T-cell (primary cell): ENCODE measurements at regions of chr9 and their contacts with region 1.

Region 1: GRCh38 chr9:89549031-89549644 is 51.2 kb upstream of the SEMA4D start:
- DNase-seq: peak; percentile 58 to 93 (median 81)
- ATAC-seq: peak; percentile 96 to 99 (median 97)
- H3K4me3 ChIP-seq: no peak overlapping the region
- H3K4me3 Mint-ChIP-seq: peak overlapping the region in 1 of 3 donors; percentile 45
- H3K27ac ChIP-seq: peak overlapping the region; percentile 2
- H3K27ac Mint-ChIP-seq: peak overlapping the region; percentile 74 to 75
- H3K4me1 ChIP-seq: peaks cover 8 to 20% of the 10 kb centered on the region in 2 experiments
- H3K4me1 Mint-ChIP-seq: peaks cover 21 to 36% (median 28%) of the 10 kb centered on the region in 3 donors
- H3K27me3 ChIP-seq: no peaks in the 10 kb centered on the region
- H3K27me3 Mint-ChIP-seq: no peaks in the 10 kb centered on the region

Region 2: GRCh38 chr9:89410641-89411350 is 138.3 kb before region 1 on chr9:
- CTCF ChIA-PET with region 1: interaction called, 4 to 12 read pairs
- POLR2A ChIA-PET with region 1: no interaction called
- DNase-seq: peak in 1 of 35 experiments; percentile 66
- ATAC-seq: peak in 1 of 4 experiments; percentile 30
- H3K4me3 ChIP-seq: no peak overlapping the region
- H3K4me3 Mint-ChIP-seq: peak overlapping the region in 2 of 3 donors; percentile 46 to 83
- H3K27ac ChIP-seq: peak overlapping the region; percentile 11
- H3K27ac Mint-ChIP-seq: peak overlapping the region; percentile 94 to 95
- H3K4me1 ChIP-seq: peaks cover 19 to 97% of the 10 kb centered on the region in 2 experiments
- H3K4me1 Mint-ChIP-seq: peaks cover 82 to 96% (median 91%) of the 10 kb centered on the region in 3 donors
- H3K27me3 ChIP-seq: no peaks in the 10 kb centered on the region
- H3K27me3 Mint-ChIP-seq: no peaks in the 10 kb centered on the region

Region 3: GRCh38 chr9:89428901-89429890 is 119.9 kb before region 1 on chr9:
- CTCF ChIA-PET with region 1: interaction called, 31 to 66 read pairs
- POLR2A ChIA-PET with region 1: no interaction called
- DNase-seq: peak in 34 of 35 experiments; percentile 40 to 83 (median 70)
- ATAC-seq: peak; percentile 48 to 78 (median 53)
- H3K4me3 ChIP-seq: no peak overlapping the region
- H3K4me3 Mint-ChIP-seq: peak overlapping the region in 2 of 3 donors; percentile 34 to 70
- H3K27ac ChIP-seq: peak overlapping the region; percentile 27
- H3K27ac Mint-ChIP-seq: peak overlapping the region; percentile 89 to 94
- H3K4me1 ChIP-seq: peaks cover 27 to 100% of the 10 kb centered on the region in 2 experiments
- H3K4me1 Mint-ChIP-seq: peaks cover 95 to 100% (median 98%) of the 10 kb centered on the region in 3 donors
- H3K27me3 ChIP-seq: no peaks in the 10 kb centered on the region
- H3K27me3 Mint-ChIP-seq: no peaks in the 10 kb centered on the region

Region 4: DNA sequence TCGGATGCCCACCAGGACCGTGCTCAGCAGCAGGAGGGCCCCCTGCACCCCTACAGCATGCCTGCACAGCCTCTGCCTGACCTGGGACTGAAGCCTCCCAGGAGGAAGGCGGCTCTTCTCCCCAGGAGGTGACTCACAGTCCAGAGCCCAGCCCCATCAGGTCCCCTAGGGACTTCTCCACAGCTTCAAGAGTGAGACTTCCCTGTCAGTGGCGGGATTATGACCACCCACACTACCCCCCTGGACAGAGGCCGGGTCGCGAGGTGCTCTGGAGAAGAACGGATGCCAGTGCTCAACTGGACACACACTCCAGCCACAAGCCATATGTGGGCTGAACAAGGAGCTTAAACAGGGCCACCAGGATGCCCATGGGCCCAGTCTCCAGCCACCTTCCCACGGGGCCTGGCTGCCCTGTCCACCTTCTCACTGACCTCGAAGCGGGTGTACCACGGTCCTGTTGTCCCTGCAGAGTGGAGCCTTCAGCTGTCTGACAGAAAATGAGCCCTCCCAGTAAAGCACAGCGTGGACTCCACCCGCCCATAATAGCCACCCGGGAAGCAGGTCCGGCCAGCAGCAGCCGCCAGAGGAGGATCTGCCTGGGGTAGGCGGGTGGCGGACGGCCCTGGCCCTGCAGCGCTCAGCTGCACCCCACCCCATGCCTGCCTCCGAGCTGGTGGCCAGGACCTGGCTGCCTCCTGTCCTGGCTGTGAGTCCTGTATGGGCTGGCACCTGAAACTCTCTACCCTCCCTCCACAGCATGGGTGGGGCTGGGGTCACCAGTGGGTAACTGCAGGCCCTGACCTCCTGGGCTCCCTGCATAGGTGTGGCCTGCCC is 105.9 kb before region 1 on chr9:
- CTCF ChIA-PET with region 1: interaction called, 8 to 11 read pairs
- POLR2A ChIA-PET with region 1: interaction called in 1 of 2 experiments, 5 read pairs
- DNase-seq: no peak
- ATAC-seq: no peak
- H3K4me3 ChIP-seq: no peak overlapping the region
- H3K4me3 Mint-ChIP-seq: peak overlapping the region in 1 of 3 donors; percentile 72
- H3K27ac ChIP-seq: peak overlapping the region; percentile 70
- H3K27ac Mint-ChIP-seq: peak overlapping the region; percentile 92 to 95
- H3K4me1 ChIP-seq: peaks cover 31 to 93% of the 10 kb centered on the region in 2 experiments
- H3K4me1 Mint-ChIP-seq: peaks cover 71 to 94% (median 93%) of the 10 kb centered on the region in 3 donors
- H3K27me3 ChIP-seq: no peaks in the 10 kb centered on the region
- H3K27me3 Mint-ChIP-seq: no peaks in the 10 kb centered on the region

Region 5: DNA sequence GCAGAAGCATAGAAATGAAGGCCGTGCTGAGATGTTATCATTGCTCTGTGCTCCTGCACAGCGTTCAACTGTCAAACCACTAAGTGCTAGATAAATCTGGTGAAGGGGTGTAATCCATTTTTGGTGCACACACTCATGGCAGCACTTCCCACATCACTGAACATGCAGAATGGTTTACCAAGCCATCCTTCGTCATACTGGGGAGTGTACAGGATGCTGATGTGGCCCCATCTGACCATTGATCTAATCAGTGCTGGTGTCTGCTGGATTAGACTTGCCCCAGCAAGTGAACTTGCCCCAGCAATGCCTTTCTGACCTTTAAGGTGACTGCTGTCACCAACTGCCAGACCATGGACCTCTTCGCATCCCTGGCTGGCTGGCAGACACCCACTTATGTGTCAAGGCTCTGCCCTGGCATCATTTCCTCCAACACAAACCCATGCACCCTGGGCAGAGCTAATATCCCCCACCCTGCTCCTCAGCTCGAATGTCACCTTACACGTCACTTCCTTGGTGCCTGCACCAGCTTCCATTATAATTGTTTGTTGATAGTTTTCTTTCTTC is 47.0 kb before region 1 on chr9:
- CTCF ChIA-PET with region 1: interaction called in 1 of 2 experiments, 16 read pairs
- POLR2A ChIA-PET with region 1: no interaction called
- DNase-seq: peak in 34 of 35 experiments; percentile 31 to 85 (median 60)
- ATAC-seq: peak; percentile 31 to 76 (median 46)
- H3K4me3 ChIP-seq: no peak overlapping the region
- H3K4me3 Mint-ChIP-seq: peak overlapping the region; percentile 14 to 44 (median 29)
- H3K27ac ChIP-seq: peak overlapping the region; percentile 91
- H3K27ac Mint-ChIP-seq: peak overlapping the region; percentile 91 to 94
- H3K4me1 ChIP-seq: peaks cover 48 to 67% of the 10 kb centered on the region in 2 experiments
- H3K4me1 Mint-ChIP-seq: peaks cover 73 to 87% (median 79%) of the 10 kb centered on the region in 3 donors
- H3K27me3 ChIP-seq: no peaks in the 10 kb centered on the region
- H3K27me3 Mint-ChIP-seq: no peaks in the 10 kb centered on the region

Region 6: GRCh38 chr9:89529243-89530035 is 19.7 kb before region 1 on chr9:
- CTCF ChIA-PET with region 1: interaction called, 6 to 18 read pairs
- POLR2A ChIA-PET with region 1: interaction called, 3 read pairs
- DNase-seq: peak in 12 of 35 experiments; percentile 15 to 54 (median 28)
- ATAC-seq: peak; percentile 63 to 92 (median 79)
- H3K4me3 ChIP-seq: no peak overlapping the region
- H3K4me3 Mint-ChIP-seq: peak overlapping the region; percentile 28 to 78 (median 31)
- H3K27ac ChIP-seq: peak overlapping the region; percentile 52
- H3K27ac Mint-ChIP-seq: peak overlapping the region; percentile 92
- H3K4me1 ChIP-seq: peaks cover 62 to 92% of the 10 kb centered on the region in 2 experiments
- H3K4me1 Mint-ChIP-seq: peaks cover 99 to 100% (median 99%) of the 10 kb centered on the region in 3 donors
- H3K27me3 ChIP-seq: no peaks in the 10 kb centered on the region
- H3K27me3 Mint-ChIP-seq: no peaks in the 10 kb centered on the region

Region 7: DNA sequence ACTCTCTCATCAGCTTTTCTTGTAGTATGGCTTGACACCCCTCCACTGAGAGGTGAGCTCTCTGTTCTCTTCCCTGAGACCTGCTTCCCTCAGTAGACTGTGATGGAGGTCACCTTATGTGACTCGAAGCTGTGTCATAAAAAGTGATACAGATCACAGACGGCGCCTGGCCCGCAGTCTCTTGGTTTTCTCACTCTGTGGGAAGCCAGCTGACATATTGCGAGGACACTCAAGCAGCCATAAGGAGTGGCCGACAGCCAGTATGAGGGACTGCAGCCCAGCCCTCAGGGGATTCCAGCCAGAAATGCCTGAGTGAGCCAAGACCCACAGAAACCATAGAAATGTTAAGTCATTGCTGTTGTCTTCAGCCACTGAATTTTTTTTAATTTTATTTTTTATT is 93.7 kb after region 1 on chr9:
- CTCF ChIA-PET with region 1: no interaction called
- POLR2A ChIA-PET with region 1: no interaction called
- DNase-seq: no peak
- ATAC-seq: no peak
- H3K4me3 ChIP-seq: no peak overlapping the region
- H3K4me3 Mint-ChIP-seq: no peak overlapping the region
- H3K27ac ChIP-seq: no peak overlapping the region
- H3K27ac Mint-ChIP-seq: no peak overlapping the region
- H3K4me1 ChIP-seq: no peaks in the 10 kb centered on the region
- H3K4me1 Mint-ChIP-seq: no peaks in the 10 kb centered on the region
- H3K27me3 ChIP-seq: peaks cover 0 to 2% of the 10 kb centered on the region in 2 experiments
- H3K27me3 Mint-ChIP-seq: no peaks in the 10 kb centered on the region